Calu3 (cell line): ENCODE measurements at regions of chr15 and their contacts with region 1.

Region 1: GRCh38 chr15:83248151-83249029 is 36.1 kb downstream of the BNC1 start:
- DNase-seq: peak; percentile 54
- H3K4me3 Mint-ChIP-seq: no peak overlapping the region
- H3K27ac Mint-ChIP-seq: no peak overlapping the region
- H3K4me1 Mint-ChIP-seq: no peaks in the 10 kb centered on the region
- H3K27me3 Mint-ChIP-seq: peaks cover 92% of the 10 kb centered on the region
- CTCF ChIP-seq: peak; percentile 90

Region 2: DNA sequence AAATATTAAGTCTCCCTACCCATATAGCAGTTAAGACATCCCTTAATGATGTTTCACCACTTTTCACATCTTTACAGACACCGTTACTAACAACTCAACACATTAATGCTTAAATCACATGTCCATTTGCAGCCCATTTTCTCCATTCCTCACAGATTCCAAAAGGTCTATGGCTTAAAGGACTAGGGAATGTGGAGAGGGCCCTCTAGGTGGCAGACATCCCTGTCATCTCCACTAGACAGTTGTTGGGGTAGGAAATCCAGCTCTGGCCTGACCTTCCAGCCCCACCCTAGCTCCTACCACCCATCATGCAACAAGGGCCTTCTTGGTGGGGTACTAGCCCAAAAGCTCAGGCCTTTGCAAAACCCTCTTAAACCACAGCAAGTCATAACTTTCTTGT is 626.4 kb before region 1 on chr15:
- CTCF ChIA-PET with region 1: no interaction called
- intact Hi-C with region 1: no loop called
- DNase-seq: no peak
- H3K4me3 Mint-ChIP-seq: no peak overlapping the region
- H3K27ac Mint-ChIP-seq: no peak overlapping the region
- H3K4me1 Mint-ChIP-seq: peaks cover 10% of the 10 kb centered on the region
- H3K27me3 Mint-ChIP-seq: no peaks in the 10 kb centered on the region
- CTCF ChIP-seq: no peak

Region 3: DNA sequence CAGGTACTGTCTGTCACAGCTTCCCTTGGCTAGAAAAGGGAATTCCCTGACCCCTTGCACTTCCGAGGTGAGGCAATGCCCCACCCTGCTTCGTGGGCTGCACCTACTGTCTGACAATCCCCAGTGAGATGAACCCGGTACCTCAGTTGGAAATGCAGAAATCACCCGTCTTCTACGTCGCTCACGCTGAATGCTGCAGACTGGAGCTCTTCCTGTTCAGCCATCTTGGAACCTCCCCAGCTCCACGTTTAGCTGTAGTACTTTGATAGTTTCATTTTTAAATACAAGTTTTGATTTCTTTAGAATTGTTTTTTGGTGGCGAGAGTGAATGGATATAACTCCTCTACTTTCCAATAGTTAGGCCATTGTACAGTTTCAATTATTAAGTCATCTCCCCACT is 22.9 kb before region 1 on chr15:
- CTCF ChIA-PET with region 1: no interaction called
- intact Hi-C with region 1: no loop called
- DNase-seq: peak; percentile 15
- H3K4me3 Mint-ChIP-seq: peak overlapping the region; percentile 66
- H3K27ac Mint-ChIP-seq: peak overlapping the region; percentile 66
- H3K4me1 Mint-ChIP-seq: peaks cover 11% of the 10 kb centered on the region
- H3K27me3 Mint-ChIP-seq: no peaks in the 10 kb centered on the region
- CTCF ChIP-seq: no peak

Region 4: DNA sequence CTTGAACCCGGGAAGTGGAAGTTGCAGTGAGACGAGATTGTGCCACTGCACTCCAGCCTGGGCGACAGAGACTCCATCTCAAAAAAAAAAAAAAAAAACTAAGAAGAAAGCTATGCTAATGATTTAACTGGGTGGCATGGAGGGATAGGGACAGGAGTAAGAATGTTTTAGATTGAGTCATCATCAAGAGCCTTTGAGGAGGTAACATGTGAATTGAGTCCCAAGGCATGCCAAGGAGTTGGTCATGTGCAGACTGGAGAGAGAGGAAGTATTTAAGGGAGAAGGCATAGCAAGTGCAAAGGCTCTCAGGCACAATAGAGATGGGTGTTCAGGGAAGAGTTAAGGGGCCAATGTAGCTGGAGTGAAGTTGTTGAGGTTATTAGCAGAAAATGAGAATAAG is 27.0 kb after region 1 on chr15:
- CTCF ChIA-PET with region 1: no interaction called
- intact Hi-C with region 1: no loop called
- DNase-seq: no peak
- H3K4me3 Mint-ChIP-seq: no peak overlapping the region
- H3K27ac Mint-ChIP-seq: no peak overlapping the region
- H3K4me1 Mint-ChIP-seq: no peaks in the 10 kb centered on the region
- H3K27me3 Mint-ChIP-seq: peaks cover 56% of the 10 kb centered on the region
- CTCF ChIP-seq: no peak

Region 5: GRCh38 chr15:83372420-83372891 is 124.1 kb after region 1 on chr15:
- CTCF ChIA-PET with region 1: interaction called, 11 read pairs
- intact Hi-C with region 1: no loop called
- DNase-seq: no peak
- H3K4me3 Mint-ChIP-seq: no peak overlapping the region
- H3K27ac Mint-ChIP-seq: no peak overlapping the region
- H3K4me1 Mint-ChIP-seq: peaks cover 8% of the 10 kb centered on the region
- H3K27me3 Mint-ChIP-seq: peaks cover 95% of the 10 kb centered on the region
- CTCF ChIP-seq: no peak

Region 6: DNA sequence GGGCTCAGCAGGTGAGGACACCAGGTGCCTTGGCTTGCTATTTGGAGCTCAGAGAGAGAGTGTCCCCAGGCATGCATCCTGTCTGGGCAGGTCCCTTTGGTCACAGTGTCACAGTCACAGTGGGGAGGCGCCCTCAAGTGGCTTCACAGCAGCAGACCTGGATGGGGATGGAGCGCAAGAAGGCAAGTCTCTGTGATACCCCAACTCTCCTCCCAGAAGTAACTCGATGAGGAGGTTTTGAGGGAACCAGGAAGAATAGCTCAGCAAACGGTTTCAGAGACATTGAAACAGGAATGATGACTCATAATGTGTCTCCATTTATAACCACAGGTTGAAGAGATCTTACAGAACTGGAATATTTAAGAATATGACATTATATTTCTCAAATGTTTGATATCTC is 132.3 kb after region 1 on chr15:
- CTCF ChIA-PET with region 1: interaction called, 41 read pairs
- intact Hi-C with region 1: loop called (anchors 1 kb)
- DNase-seq: peak; percentile 79
- H3K4me3 Mint-ChIP-seq: no peak overlapping the region
- H3K27ac Mint-ChIP-seq: no peak overlapping the region
- H3K4me1 Mint-ChIP-seq: peaks cover 20% of the 10 kb centered on the region
- H3K27me3 Mint-ChIP-seq: peaks cover 26% of the 10 kb centered on the region
- CTCF ChIP-seq: no peak

Region 7: DNA sequence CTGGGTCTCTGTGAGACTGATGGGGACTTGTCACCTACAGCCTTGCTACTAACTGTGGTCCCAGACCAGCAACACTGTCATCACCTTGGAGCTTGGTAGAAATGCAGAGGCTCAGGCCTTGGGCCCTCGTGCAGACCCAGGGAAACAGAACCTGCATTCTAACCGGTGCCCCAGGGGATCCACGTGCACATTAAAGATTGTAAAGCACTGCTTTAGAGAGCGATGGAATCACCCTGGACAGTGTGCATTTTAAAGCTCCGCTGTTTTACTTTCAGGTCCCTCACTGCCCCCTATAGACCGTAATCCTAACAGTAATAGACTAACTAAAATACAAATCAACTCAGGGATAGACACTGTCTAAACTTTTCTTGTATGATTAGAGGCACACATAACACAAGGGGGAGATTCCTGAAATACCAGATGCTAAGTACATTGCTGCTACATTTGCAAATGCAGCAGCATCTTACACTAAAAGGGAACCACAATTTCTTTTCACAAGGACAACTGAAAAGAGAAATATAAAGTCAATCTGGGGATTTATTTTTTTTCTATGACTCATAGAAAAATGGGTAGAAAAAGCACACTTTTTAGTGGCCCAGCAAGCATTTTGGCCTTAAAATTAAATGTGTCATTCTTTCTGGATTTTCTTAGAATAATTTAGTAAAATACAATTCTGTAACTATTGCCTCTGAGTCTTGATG is 188.2 kb after region 1 on chr15:
- CTCF ChIA-PET with region 1: interaction called, 85 read pairs
- intact Hi-C with region 1: loop called (anchors 1 kb)
- DNase-seq: peak; percentile 25
- H3K4me3 Mint-ChIP-seq: no peak overlapping the region
- H3K27ac Mint-ChIP-seq: no peak overlapping the region
- H3K4me1 Mint-ChIP-seq: no peaks in the 10 kb centered on the region
- H3K27me3 Mint-ChIP-seq: peaks cover 51% of the 10 kb centered on the region
- CTCF ChIP-seq: peak; percentile 52

Region 8: GRCh38 chr15:83559310-83559966 is 311.0 kb after region 1 on chr15:
- CTCF ChIA-PET with region 1: interaction called, 4 read pairs
- intact Hi-C with region 1: loop called (anchors 1 kb)
- DNase-seq: peak; percentile 72
- H3K4me3 Mint-ChIP-seq: no peak overlapping the region
- H3K27ac Mint-ChIP-seq: no peak overlapping the region
- H3K4me1 Mint-ChIP-seq: no peaks in the 10 kb centered on the region
- H3K27me3 Mint-ChIP-seq: peaks cover 14% of the 10 kb centered on the region
- CTCF ChIP-seq: peak; percentile 85